Ascending aorta (tissue), 2 donors: ENCODE measurements at regions of chr6 and their contacts with region 1.

Region 1: GRCh38 chr6:43496370-43497128 is 13.6 kb downstream of the LRRC73 start:
- DNase-seq: no peak
- H3K4me3 ChIP-seq: peak overlapping the region in 1 of 2 donors; percentile 17
- H3K27ac ChIP-seq: peak overlapping the region; percentile 17
- H3K4me1 ChIP-seq: peaks cover 7 to 30% of the 10 kb centered on the region in 2 donors
- H3K27me3 ChIP-seq: no peaks in the 10 kb centered on the region
- CTCF ChIP-seq: peak; percentile 49 to 65 (median 61)

Region 2: GRCh38 chr6:43454696-43455530 is 41.6 kb before region 1 on chr6:
- intact Hi-C with region 1: loop called (anchors 2 kb)
- DNase-seq: peak in 1 of 2 donors; percentile 88
- H3K4me3 ChIP-seq: peak overlapping the region; percentile 58 to 64
- H3K27ac ChIP-seq: no peak overlapping the region
- H3K4me1 ChIP-seq: peaks cover 0 to 9% of the 10 kb centered on the region in 2 donors
- H3K27me3 ChIP-seq: peaks cover 5% of the 10 kb centered on the region
- CTCF ChIP-seq: no peak